ENCODE measurements at regions of chr6 and their contacts with region 1.

Region 1: GRCh38 chr6:26020329-26021000 is 57.9 kb downstream of the TRIM38 start:
- DNase-seq: peak; percentile 78 to 84
- H3K4me3 ChIP-seq: peak overlapping the region; percentile 84
- H3K27ac ChIP-seq: peak overlapping the region; percentile 94
- H3K4me1 ChIP-seq: peaks cover 27% of the 10 kb centered on the region
- H3K27me3 ChIP-seq: no peaks in the 10 kb centered on the region
- CTCF ChIP-seq: no peak

Region 2: DNA sequence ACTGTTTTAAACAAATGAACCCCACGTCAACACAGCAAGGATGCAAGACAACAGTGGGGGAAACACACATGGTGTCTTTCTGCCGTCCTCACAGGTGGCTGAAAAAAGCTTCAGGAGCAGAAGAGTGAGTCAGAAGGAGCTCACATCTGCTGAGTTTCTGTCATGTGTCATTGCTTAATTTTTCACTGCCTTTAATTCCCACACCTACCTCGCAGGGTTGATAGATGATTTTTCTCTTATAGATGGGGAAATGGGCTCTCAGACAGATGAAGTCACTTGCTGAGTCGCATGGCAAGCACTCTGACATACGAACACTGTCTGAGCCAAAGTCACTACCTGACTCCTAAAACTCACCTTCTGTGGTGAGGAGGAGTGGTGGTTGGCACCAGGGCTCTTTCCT is 769.6 kb before region 1 on chr6:
- CTCF ChIA-PET with region 1: no interaction called
- POLR2A ChIA-PET with region 1: interaction called, 19 read pairs
- intact Hi-C with region 1: no loop called
- DNase-seq: peak; percentile 2 to 70
- H3K4me3 ChIP-seq: no peak overlapping the region
- H3K27ac ChIP-seq: 0 out of 2 replicates have a peak overlapping the region, but pooled peaks have one; percentile 18
- H3K4me1 ChIP-seq: peaks cover 6% of the 10 kb centered on the region; the same call in 1 of the 2 replicates
- H3K27me3 ChIP-seq: no peaks in the 10 kb centered on the region
- CTCF ChIP-seq: no peak

Region 3: GRCh38 chr6:25270559-25270958 is 749.9 kb before region 1 on chr6:
- CTCF ChIA-PET with region 1: no interaction called
- POLR2A ChIA-PET with region 1: interaction called, 11 read pairs
- intact Hi-C with region 1: no loop called
- DNase-seq: no peak
- H3K4me3 ChIP-seq: no peak overlapping the region
- H3K27ac ChIP-seq: no peak overlapping the region
- H3K4me1 ChIP-seq: no peaks in the 10 kb centered on the region
- H3K27me3 ChIP-seq: no peaks in the 10 kb centered on the region
- CTCF ChIP-seq: no peak

Region 4: GRCh38 chr6:25297039-25297441 is 723.4 kb before region 1 on chr6:
- CTCF ChIA-PET with region 1: interaction called, 10 read pairs
- POLR2A ChIA-PET with region 1: no interaction called
- intact Hi-C with region 1: no loop called
- DNase-seq: no peak
- H3K4me3 ChIP-seq: no peak overlapping the region
- H3K27ac ChIP-seq: no peak overlapping the region
- H3K4me1 ChIP-seq: no peaks in the 10 kb centered on the region
- H3K27me3 ChIP-seq: no peaks in the 10 kb centered on the region
- CTCF ChIP-seq: no peak